Gastrocnemius medialis (tissue), 4 donors: ENCODE measurements at regions of chr11 and their contacts with region 1.

Region 1: GRCh38 chr11:3217676-3218482 is 734 bp downstream of the MRGPRG start:
- DNase-seq: peak in 1 of 2 donors; percentile 7
- ATAC-seq: no peak
- H3K4me3 ChIP-seq: no peak overlapping the region
- H3K27ac ChIP-seq: no peak overlapping the region
- H3K4me1 ChIP-seq: no peaks in the 10 kb centered on the region
- H3K27me3 ChIP-seq: peaks cover 12 to 40% (median 14%) of the 10 kb centered on the region in 3 donors
- CTCF ChIP-seq: no peak
- POLR2A ChIP-seq: no peak

Region 2: DNA sequence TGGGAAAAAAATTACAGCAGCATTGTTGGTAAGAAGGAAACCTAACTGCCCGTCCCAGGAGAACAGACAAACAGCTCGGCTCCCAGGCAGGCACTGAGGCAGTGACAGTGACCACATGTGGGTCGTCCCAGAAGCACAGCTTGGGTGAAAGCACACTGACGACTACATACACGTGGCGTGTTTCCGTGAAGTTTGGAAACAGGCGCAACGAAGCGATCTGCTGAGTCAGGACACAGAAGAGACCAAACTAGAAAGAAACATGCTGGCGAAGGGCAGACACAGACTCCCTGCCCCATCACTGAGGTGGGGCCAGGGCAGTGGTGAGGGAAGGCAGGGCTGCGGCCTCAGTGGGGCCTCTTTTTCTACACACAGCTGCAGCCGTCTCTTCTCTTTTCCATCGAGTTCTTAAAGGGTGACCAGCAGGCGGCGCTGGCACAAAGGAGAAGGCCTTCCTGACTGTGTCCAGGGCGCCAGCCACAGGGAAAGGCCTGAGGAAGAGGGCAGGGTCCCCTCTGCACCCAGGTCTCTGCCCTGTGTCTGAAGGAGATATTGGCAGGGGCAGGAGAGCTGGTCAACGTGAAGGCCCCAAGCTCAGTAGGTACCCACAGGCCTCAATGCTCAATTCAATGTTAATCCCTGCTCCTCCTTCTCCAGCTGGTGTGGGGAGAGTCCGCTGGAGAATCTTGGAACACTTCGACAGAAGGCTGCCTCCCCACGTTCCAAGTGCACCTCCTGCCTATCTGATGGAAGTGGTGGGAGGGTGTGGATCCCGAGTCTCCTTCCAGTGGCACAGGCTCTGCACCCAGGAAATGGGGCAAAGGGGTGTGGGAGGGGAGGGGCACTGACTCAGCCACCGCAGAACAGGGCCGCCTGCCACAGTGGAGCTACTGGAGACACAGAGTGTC is 180.6 kb before region 1 on chr11:
- in situ Hi-C with region 1: no loop called
- intact Hi-C with region 1: loop called (anchors 5 kb)
- DNase-seq: peak; percentile 48 to 74
- ATAC-seq: no peak
- H3K4me3 ChIP-seq: no peak overlapping the region
- H3K27ac ChIP-seq: peak overlapping the region in 2 of 4 donors; percentile 1 to 40
- H3K4me1 ChIP-seq: peaks cover 11 to 13% of the 10 kb centered on the region in 2 donors
- H3K27me3 ChIP-seq: no peaks in the 10 kb centered on the region
- CTCF ChIP-seq: peak; percentile 77 to 94 (median 84)
- POLR2A ChIP-seq: no peak

Region 3: DNA sequence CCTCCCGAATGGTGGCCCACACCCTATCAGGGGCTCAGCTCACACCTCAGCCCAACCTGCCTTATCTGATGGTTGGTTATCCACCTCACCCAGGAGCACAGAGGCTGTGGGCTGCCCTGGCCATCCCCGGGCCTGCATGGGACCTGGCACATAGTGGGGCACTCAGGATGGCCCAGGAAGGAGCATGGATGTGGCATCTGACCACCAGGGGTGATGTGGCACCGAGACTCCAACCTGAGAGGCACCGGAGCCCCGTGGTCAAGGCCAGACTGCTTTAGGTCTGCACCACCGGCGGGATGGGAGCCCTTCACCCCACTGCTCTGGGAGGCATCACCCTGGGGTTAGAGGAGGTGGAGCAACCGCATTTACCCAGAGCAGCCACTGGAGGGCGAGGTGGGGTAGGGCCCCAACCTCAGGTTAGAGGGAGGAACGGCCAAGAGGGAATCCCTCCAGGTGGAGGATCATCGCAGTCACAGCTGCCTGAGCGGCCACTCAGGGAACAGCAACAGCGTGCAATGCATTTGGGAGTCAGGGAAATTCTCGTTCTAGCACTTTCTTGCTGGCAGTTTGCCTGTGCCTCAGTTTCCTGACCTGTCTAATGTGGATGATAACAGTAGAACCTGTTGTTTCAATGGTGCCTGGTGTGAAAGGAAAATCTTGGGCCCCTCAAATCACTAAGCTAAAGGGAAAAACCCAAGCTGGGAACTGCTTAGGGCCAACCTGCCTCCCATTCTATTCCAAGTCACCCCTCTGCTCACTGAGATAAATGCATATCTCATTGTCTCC is 107.8 kb before region 1 on chr11:
- in situ Hi-C with region 1: loop called in 3 of 4 experiments (anchors 5 to 10 kb)
- intact Hi-C with region 1: loop called (anchors 1 kb)
- DNase-seq: peak; percentile 39 to 67
- ATAC-seq: peak; percentile 94 to 96
- H3K4me3 ChIP-seq: no peak overlapping the region
- H3K27ac ChIP-seq: no peak overlapping the region
- H3K4me1 ChIP-seq: no peaks in the 10 kb centered on the region
- H3K27me3 ChIP-seq: no peaks in the 10 kb centered on the region
- CTCF ChIP-seq: peak; percentile 72 to 88 (median 82)
- POLR2A ChIP-seq: no peak

Region 4: DNA sequence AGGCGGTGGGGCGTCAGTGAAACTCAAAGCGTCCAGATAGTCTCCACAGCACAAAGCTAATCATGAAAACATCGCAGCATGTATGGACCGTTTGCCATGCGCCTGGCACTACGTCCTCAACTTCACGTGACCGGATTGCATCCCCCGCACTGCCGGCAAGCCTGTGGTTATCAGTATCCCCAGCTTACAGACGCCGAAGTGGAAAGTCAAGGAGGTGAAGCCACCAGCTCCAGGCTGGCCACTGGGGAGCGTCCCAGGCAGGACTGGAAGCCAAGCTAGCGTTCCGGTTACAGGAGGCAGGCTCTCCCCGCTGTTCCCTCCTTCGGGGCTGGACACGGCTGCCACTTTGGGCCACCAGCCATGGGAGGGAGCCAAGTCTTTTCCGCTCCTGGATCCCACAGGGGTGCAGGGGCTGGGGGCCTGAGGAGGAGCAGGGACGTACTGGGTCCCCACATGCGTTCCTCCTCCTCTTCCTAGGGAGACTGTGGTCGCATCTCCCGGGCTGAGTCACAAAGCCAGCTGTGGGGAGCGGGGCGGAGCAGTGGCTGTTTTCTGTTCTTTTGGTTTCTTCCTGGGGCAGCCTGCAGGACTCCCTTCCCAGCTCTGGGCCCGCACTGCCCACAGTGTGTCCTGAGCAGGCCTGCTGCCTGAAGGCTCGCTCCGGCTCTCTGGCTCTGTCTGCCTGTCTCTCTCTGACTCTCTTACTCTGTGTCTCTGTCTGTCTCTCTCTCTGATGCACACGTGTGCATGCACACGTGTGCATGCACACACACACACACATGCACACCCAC is 48.4 kb before region 1 on chr11:
- in situ Hi-C with region 1: no loop called
- intact Hi-C with region 1: loop called (anchors 2 kb)
- DNase-seq: peak; percentile 38 to 72
- ATAC-seq: peak; percentile 53 to 78
- H3K4me3 ChIP-seq: peak overlapping the region; percentile 42 to 58 (median 53)
- H3K27ac ChIP-seq: peak overlapping the region; percentile 69 to 81 (median 76)
- H3K4me1 ChIP-seq: peaks cover 24 to 30% of the 10 kb centered on the region in 2 donors
- H3K27me3 ChIP-seq: no peaks in the 10 kb centered on the region
- CTCF ChIP-seq: peak in 1 of 5 experiments; percentile 29
- POLR2A ChIP-seq: no peak